Activated T-helper 2 cell treated with anti-CD3 and anti-CD28 coated beads, Interferon-gamma antibody, Interleukin-2, Interleukin-4, amounts not matched to agents 10 μg/mL and 5 μg/mL and 100 μg/mL, durations not matched to agents 14 hours and 24 hours and 36 hours (primary cell): ENCODE measurements at regions of chr11 and their contacts with region 1.

Region 1: DNA sequence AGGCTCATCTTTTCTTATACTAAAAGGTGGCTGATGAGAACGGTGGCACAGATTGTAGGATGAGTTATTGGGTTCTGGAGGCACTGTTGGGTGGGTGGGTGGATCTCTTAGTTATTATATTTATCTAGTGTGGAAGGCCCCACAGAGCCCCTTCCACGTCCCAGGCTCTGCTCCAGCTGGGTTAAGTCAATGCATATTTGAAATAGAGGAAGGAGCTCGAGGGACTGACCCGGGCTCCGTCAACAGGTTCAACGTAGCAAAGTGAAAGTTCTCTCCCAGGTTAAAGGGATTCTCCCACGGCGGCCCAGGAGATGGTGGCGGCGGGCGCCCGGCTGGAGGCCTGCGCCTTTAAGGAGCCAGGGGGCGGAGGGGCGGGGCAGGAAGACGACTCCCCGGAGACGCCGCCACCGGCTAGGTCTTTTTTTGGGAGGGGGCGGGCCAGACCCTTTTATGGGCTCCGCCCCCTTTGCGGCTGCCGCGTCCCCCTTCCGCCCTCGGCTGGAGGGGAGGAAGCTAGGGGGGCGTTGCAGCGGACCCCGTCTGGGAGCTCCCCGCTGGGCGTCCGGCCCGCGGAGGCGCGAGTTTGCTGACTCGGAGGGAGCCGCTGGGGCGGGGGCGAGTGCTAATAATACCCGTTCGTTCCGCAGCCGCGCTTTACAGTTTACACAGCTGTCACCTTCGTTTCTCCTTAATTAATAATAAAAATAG is 1.5 kb upstream of the INPPL1 start:
- DNase-seq: peak; percentile 95
- H3K4me3 Mint-ChIP-seq: peak overlapping the region; percentile 80
- H3K27ac Mint-ChIP-seq: peak overlapping the region; percentile 77
- H3K4me1 Mint-ChIP-seq: peaks cover 23% of the 10 kb centered on the region
- H3K27me3 Mint-ChIP-seq: peaks cover 2% of the 10 kb centered on the region

Region 2: DNA sequence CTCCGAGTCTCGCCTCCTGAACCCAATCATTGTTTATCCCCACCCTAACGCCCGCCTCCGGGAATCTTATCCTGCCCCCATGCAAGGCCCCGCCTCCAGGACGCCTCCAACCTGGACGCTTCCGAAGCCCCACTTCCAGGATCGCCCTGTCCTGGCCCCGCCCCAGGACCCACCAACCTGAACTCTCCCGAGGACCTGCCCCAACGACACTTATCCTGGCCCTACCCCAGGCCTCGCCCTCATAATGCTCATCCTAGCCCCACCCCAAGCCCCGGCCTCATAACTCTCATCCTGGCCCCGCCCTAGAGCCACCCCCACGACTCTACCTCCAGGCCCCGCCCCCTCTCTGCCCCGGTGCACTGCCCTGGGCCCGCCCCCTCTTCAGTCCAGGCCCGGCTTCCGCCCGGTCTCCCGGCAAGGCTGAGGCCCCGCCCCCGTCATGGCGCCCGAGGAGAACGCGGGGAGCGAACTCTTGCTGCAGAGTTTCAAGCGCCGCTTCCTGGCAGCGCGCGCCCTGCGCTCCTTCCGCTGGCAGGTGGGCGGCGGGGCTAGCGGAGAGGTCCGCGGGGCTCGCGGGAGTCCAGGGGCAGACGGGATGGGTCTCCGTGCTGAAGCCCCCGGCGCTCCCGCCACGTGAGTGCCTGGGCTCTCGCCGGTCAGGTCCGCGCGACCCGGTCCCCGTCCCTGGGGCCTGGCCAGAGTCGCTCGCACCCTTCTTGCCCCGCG is 435.8 kb before region 1 on chr11:
- intact Hi-C with region 1: loop called (anchors 5 kb)
- DNase-seq: peak; percentile 91
- H3K4me3 Mint-ChIP-seq: peak overlapping the region; percentile 95
- H3K27ac Mint-ChIP-seq: peak overlapping the region; percentile 97
- H3K4me1 Mint-ChIP-seq: peaks cover 21% of the 10 kb centered on the region
- H3K27me3 Mint-ChIP-seq: no peaks in the 10 kb centered on the region

Region 3: DNA sequence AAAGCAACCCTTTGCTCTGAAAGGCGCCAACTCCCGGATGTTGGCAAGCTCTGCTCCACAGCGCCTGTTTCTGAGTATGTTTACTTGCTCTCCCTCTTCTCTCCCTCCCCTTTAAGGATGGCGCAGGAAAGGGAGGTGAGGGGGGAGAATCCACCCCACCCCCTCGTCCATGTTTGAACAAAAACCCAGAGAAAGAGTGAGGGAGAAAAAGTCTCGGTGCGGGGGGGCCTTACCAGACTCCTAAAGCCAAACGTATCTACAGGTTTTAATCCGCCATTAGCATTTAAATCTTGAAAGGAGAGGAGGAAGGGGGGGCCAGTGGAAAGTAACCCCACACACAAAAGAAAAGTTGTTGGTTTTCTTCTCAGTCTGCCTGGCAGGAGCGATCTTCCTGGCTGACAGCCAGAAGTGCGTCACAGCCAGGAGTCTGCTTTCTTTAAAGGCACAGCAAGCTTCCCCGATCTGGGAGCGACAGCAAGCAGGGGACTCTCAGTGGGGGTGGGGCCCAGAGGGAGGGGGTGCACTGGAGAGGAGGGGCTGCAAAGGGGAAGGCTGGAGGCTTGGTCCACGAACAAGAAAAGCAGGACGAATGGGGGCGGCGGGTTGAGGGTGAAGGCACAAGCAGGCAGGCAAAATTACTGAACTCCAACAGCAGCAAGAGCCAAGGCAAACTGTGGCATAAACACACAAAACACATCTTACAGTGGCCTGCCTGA is 182.2 kb before region 1 on chr11:
- intact Hi-C with region 1: loop called (anchors 5 kb)
- DNase-seq: peak; percentile 50
- H3K4me3 Mint-ChIP-seq: no peak overlapping the region
- H3K27ac Mint-ChIP-seq: no peak overlapping the region
- H3K4me1 Mint-ChIP-seq: peaks cover 31% of the 10 kb centered on the region
- H3K27me3 Mint-ChIP-seq: no peaks in the 10 kb centered on the region

Region 4: GRCh38 chr11:72102946-72103753 is 119.9 kb before region 1 on chr11 and contains the start of gene LAMTOR1:
- intact Hi-C with region 1: loop called (anchors 2 kb)
- DNase-seq: peak; percentile 97
- H3K4me3 Mint-ChIP-seq: peak within 1 kb of the TSS; percentile 95
- H3K27ac Mint-ChIP-seq: peak within 1 kb of the TSS; percentile 96
- H3K4me1 Mint-ChIP-seq: peaks cover 32% of the 10 kb centered on the region
- H3K27me3 Mint-ChIP-seq: no peaks in the 10 kb centered on the region
- total RNA-seq, gene LAMTOR1: 95.1 and 100 TPM in 2 replicates

Region 5: GRCh38 chr11:72112321-72113219 is 110.5 kb before region 1 on chr11 and contains the start of gene ANAPC15:
- intact Hi-C with region 1: loop called (anchors 1 kb)
- DNase-seq: peak; percentile 98
- H3K4me3 Mint-ChIP-seq: peak within 1 kb of the TSS; percentile 89
- H3K27ac Mint-ChIP-seq: peak within 1 kb of the TSS; percentile 98
- H3K4me1 Mint-ChIP-seq: peaks cover 16% of the 10 kb centered on the region
- H3K27me3 Mint-ChIP-seq: no peaks in the 10 kb centered on the region
- total RNA-seq, gene ANAPC15: 61.6 and 67.9 TPM in 2 replicates

Region 6: DNA sequence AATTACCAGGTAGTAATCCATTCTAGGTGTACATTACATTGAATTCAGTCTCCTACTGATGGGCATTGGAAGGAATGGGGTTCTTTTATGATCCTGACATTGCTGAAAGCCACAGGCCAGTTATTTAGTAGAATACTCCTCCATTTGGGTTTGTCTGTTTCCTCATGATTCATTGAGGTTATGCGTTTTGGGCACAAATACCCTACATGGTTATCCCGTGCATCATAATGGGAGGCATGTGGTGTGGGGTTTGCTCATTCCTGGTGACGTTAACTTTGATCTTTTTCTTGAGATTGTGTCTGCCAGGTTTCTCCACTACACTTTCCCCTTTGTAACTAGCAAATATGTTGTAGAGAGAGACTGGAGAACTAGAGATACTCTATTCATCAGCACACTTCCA is 82.0 kb before region 1 on chr11:
- intact Hi-C with region 1: loop called (anchors 1 kb)
- DNase-seq: peak; percentile 23
- H3K4me3 Mint-ChIP-seq: peak overlapping the region; percentile 35
- H3K27ac Mint-ChIP-seq: peak overlapping the region; percentile 92
- H3K4me1 Mint-ChIP-seq: peaks cover 36% of the 10 kb centered on the region
- H3K27me3 Mint-ChIP-seq: no peaks in the 10 kb centered on the region

Region 7: DNA sequence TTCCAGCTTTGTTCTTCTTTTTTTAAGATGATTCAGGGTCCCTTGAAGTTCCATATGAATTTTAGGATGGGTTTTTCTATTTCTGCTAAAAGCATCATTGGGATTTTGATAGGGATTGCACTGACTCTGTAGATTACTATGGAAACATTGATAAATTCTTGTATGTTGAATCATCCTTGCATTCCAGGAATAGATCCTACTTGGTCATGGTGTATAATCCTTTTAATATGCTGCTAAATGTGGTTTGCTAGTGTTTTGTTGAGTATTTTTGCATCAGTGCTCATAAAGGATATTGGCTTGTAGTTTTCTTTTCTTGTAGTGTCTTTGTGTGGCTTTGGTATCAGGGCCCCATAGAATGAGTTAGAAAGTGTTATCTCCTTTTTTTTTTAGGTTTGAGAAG is 55.9 kb after region 1 on chr11:
- intact Hi-C with region 1: no loop called
- DNase-seq: no peak
- H3K4me3 Mint-ChIP-seq: no peak overlapping the region
- H3K27ac Mint-ChIP-seq: no peak overlapping the region
- H3K4me1 Mint-ChIP-seq: no peaks in the 10 kb centered on the region
- H3K27me3 Mint-ChIP-seq: peaks cover 36% of the 10 kb centered on the region

Region 8: DNA sequence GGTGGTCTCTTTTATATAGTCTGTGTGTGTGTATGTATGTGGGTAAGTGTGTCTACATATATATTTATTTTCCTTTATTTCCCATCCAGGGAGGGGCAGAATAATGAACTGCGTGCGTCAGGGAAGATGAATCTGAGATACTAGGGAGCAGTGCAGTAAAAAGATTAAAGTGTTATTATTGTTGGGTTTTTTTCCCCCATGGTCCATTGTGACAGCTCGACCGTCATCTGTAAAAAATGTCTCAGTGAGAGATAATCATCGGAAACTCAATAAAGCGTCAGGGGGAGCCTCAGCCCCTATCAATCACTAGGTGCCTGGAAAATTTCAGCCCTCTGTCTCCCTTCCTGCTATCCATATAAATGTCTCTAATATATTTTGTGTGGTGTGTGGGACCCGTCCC is 146.7 kb after region 1 on chr11:
- intact Hi-C with region 1: no loop called
- DNase-seq: no peak
- H3K4me3 Mint-ChIP-seq: no peak overlapping the region
- H3K27ac Mint-ChIP-seq: no peak overlapping the region
- H3K4me1 Mint-ChIP-seq: peaks cover 1% of the 10 kb centered on the region
- H3K27me3 Mint-ChIP-seq: no peaks in the 10 kb centered on the region

Region 9: DNA sequence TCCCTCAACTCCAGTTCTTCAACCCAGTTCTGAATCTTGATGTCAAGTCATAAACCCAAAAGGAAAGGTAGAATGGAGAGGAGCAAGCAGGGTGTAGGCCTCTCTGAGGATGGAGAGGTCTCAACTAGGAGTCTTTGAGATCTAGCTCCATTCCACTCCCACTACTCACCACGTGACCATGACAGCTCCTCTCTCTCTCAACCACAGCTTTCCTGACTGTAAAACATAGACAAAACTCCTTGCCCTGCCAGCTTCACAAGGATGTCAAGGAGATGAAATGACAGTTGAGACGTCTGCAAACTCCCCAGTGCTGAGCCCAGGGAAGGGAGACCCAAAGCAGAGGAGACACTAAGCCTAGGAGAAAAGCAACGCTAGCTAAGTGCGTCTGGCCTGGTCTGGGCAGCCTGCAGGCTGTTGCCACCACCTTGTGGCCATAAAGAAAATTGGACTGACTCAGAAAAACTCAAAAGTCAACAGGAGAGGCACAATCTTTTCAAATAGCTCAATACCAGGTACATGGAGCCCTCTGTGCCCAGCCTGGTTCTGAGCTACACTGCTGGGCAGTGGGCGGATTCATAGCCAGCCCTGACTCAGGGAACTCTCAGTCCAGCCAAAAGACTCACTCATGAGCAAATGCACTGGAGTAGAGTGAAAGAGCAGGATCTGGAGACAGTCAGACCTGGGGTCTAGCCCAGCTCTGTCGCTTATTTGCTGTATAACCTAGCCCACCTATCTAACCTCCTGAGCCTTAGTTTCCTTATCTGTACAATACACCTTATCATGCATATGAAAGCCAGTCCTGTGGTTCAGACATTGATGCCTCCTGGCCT is 207.9 kb after region 1 on chr11:
- intact Hi-C with region 1: loop called (anchors 1 kb)
- DNase-seq: peak; percentile 35
- H3K4me3 Mint-ChIP-seq: peak overlapping the region; percentile 39
- H3K27ac Mint-ChIP-seq: no peak overlapping the region
- H3K4me1 Mint-ChIP-seq: peaks cover 33% of the 10 kb centered on the region
- H3K27me3 Mint-ChIP-seq: no peaks in the 10 kb centered on the region